Astrocyte of the cerebellum (primary cell): ENCODE measurements at regions of chr13 and their contacts with region 1.

Region 1: DNA sequence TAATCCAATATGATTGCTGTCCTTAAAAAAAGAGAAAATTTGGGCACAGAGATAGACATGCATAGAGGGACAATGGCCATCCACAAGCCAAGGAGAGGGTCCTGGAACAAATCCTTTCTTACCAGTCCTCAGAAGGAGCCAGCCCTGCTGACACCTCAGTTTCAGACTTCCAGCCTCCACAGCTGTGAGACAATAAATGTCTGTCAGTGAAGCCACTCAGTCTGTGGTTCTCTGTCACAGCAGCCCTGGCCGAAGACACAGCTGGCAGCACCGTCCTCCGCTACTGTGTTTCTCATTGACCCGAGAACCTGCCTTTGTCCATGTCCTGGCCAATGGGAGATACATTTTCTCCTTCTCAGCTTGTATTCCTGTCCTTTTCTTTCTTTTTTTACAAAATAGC is 207.9 kb downstream of the TM9SF2 start:
- DNase-seq: no peak
- H3K4me3 ChIP-seq: no peak overlapping the region
- CTCF ChIP-seq: no peak

Region 2: GRCh38 chr13:99796175-99796819 is 87.2 kb after region 1 on chr13:
- in situ Hi-C with region 1: loop called (anchors 5 kb)
- DNase-seq: peak; percentile 51
- H3K4me3 ChIP-seq: no peak overlapping the region
- CTCF ChIP-seq: no peak